Cardiac septum (tissue), 1 donor: ENCODE measurements at regions of chr15 and their contacts with region 1.

Region 1: GRCh38 chr15:51192521-51193280 is 98.0 kb upstream of the TNFAIP8L3 start:
- DNase-seq: peak; percentile 95

Region 2: GRCh38 chr15:50908210-50909009 is 284.3 kb before region 1 on chr15 and contains the start of gene AP4E1:
- intact Hi-C with region 1: loop called (anchors 10 kb)
- DNase-seq: peak; percentile 97
- total RNA-seq, gene AP4E1: 9.9 TPM

Region 3: DNA sequence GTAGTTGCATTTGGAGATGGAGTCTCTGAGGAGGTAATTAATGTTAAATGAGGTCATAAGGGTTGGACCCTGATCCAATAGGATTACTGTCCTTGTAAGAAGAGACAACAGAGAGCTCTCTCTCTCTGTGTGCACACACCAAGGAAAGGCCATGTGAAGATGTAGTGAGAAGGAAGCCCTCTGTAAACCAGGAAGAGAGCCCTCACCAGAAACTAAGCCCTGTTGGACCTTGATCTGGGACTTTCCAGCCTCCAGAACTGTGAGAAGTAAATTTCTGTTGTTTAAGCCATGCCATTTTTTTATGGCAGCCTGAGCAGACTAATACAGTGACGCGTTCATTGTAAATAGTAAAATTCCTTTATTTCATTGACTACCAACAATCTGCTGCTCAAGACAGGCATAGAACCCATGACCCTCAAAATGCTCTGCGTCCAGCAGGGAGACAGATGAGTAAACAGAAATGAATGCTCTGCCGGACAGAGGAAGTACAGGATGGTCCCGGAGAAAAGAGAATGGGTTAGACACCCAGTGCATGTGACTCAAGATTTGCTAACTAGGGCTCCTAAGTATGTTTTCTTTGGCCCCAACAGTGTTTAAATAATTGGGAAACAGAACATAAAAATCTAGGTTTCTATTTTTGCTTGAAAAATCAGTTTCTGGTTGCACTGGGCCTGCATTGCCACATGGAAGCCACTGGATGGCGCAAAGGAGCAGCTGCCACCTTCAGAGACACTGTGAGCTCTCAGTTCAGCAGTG is 60.1 kb before region 1 on chr15:
- intact Hi-C with region 1: loop called (anchors 5 kb)
- DNase-seq: no peak

Region 4: GRCh38 chr15:51162865-51163762 is 29.6 kb before region 1 on chr15:
- intact Hi-C with region 1: loop called (anchors 1 kb)
- DNase-seq: peak; percentile 86

Region 5: DNA sequence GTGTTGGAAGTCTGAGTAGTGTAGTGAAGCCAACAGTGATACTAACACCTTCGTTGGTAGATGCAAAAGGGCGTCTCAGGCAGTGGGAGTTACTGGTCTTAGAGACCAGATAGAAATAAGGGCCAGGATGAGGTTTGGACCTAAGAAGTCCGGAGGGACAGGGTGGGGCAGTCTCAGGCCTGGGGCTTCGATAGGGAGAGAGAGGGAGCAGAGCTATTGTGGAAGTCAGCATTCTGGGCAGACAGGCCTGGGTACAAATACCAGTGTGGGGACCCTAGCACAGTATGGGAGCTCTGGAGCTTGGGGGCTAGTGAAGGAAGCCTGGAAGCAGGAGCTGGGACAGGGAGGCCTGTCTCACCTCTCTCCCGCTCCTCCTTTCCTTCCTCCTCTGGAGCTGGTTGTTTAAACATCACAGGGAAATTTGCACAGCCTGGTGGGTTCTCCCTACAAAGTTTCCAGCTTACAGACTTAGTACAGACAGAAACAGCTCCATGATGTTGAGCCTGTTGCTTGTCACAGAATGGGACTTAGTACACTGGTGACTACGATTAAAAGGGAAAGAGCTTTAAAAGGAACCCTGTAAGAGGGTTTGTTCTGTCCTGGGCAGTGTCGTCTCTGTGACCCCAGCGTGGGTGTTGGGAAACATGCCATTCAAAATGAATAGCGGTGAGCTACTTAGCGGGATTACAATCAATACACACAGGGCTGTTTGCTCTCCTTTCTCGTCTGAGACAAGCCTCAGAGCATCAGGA is 21.6 kb before region 1 on chr15:
- intact Hi-C with region 1: loop called (anchors 2 kb)
- DNase-seq: no peak

Region 6: GRCh38 chr15:51341366-51342226 is 148.9 kb after region 1 on chr15 and contains the start of gene GLDN:
- intact Hi-C with region 1: no loop called
- DNase-seq: peak; percentile 82
- total RNA-seq, gene GLDN: 20.6 TPM